ENCODE measurements at regions of chr1 and their contacts with region 1.

Region 1: DNA sequence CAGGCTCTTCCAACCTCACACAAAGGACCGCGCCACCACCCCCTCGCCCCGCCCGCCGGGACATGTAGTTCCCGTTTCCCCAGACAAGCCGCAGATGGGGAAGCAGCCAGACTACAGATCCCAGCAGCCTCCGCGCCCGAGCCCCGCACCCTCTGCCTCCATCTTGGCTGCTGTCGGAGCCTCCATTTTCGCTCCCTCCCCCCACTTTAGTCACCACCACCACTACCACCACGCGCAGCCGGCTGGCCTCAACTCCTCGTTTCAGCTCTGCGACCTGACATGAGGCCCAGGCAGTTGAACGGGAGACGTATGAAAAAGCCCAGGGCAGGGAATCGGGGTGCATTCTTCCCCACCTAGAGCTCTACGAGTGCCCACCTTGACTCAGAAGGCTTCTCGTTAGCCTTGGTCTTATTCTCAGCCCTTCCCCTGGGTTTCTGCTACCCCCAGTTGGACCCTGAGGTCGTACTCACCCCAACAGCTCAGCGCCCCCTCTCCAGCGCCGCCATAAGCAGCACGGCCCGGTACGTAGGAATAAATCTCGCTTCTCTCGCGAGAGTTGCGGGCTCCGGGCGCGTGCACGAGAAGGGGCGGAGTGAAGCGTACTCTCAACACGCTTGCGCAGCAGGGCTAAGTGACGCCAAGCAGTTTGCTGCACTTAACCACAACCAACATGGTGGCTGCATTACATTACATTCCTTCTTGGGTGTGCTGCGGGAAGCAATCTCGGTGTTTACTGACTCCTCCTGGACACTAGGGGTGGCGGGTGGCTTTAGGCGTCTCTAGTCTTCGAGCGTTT is at the start of gene CSDE1:
- DNase-seq: peak; percentile 95 to 99
- H3K4me3 ChIP-seq: peak within 1 kb of the TSS; percentile 79
- H3K27ac ChIP-seq: peak within 1 kb of the TSS; percentile 87
- H3K4me1 ChIP-seq: peaks cover 34% of the 10 kb centered on the region
- H3K27me3 ChIP-seq: no peaks in the 10 kb centered on the region
- CTCF ChIP-seq: peak; percentile 64; the same call in 1 of the 2 replicates
- total RNA-seq, gene CSDE1: 536 and 650 TPM in 2 replicates

Region 2: GRCh38 chr1:114780344-114781226 is 22.9 kb after region 1 on chr1 and contains the start of gene SIKE1:
- CTCF ChIA-PET with region 1: no interaction called
- POLR2A ChIA-PET with region 1: interaction called, 3 read pairs
- intact Hi-C with region 1: loop called (anchors 1 kb)
- DNase-seq: peak; percentile 91 to 97
- H3K4me3 ChIP-seq: peak within 1 kb of the TSS; percentile 83
- H3K27ac ChIP-seq: peak within 1 kb of the TSS; percentile 60
- H3K4me1 ChIP-seq: peaks cover 15% of the 10 kb centered on the region
- H3K27me3 ChIP-seq: peaks cover 1% of the 10 kb centered on the region; the same call in 1 of the 2 replicates
- CTCF ChIP-seq: no peak
- total RNA-seq, gene SIKE1: 61.4 and 61.9 TPM in 2 replicates

Region 3: GRCh38 chr1:115112496-115113375 is 355.1 kb after region 1 on chr1:
- CTCF ChIA-PET with region 1: no interaction called
- POLR2A ChIA-PET with region 1: no interaction called
- intact Hi-C with region 1: loop called (anchors 5 kb)
- DNase-seq: peak in 1 of 2 experiments; percentile 56
- H3K4me3 ChIP-seq: no peak overlapping the region
- H3K27ac ChIP-seq: no peak overlapping the region
- H3K4me1 ChIP-seq: peaks cover 63% of the 10 kb centered on the region
- H3K27me3 ChIP-seq: no peaks in the 10 kb centered on the region
- CTCF ChIP-seq: peak; percentile 99

Region 4: DNA sequence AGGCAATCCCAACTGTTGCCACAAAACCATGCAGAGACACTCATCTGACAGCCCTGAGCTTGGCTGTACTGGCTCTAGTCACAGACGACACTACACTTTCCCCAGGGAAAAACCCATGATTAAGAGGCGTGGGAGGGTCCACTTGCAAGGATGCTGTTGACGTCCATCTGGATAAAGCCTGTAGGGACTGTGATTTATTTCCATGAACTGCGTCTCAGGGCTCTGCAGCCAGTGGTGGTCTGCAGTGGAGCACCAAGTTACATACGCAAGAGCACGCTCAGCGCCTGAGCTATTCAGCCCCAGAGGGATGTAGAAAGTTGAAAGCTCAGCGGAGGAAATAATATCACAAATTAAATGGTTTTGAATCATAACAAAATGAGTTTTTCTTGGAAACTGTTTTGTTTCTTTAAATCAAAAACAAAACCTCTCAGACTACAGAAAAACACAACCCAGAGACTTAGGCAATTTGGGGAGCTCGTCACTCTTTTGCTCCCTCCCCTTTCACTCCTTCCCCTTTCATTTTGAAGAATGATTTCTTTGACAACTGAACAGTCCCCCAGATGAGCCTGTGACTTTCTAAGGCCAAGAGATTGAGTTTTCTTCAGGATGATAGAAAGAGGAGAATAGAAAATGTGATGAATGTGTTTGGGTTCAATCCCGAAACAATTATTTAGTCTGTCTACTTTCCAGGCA is 509.2 kb after region 1 on chr1:
- CTCF ChIA-PET with region 1: no interaction called
- POLR2A ChIA-PET with region 1: no interaction called
- intact Hi-C with region 1: no loop called
- DNase-seq: no peak
- H3K4me3 ChIP-seq: no peak overlapping the region
- H3K27ac ChIP-seq: no peak overlapping the region
- H3K4me1 ChIP-seq: no peaks in the 10 kb centered on the region
- H3K27me3 ChIP-seq: no peaks in the 10 kb centered on the region
- CTCF ChIP-seq: no peak

Measured in PC-9 (cell line).